ENCODE measurements at regions of chr7 and their contacts with region 1.

Region 1: GRCh38 chr7:112449902-112450806 is at the start of gene IFRD1:
- H3K4me3 Mint-ChIP-seq: peak within 1 kb of the TSS; percentile 93
- H3K27ac Mint-ChIP-seq: peak within 1 kb of the TSS; percentile 99
- H3K4me1 Mint-ChIP-seq: peaks cover 38% of the 10 kb centered on the region
- H3K27me3 Mint-ChIP-seq: no peaks in the 10 kb centered on the region

Region 2: GRCh38 chr7:111561885-111562732 is 888.0 kb before region 1 on chr7 and contains the start of gene IMMP2L:
- intact Hi-C with region 1: loop called (anchors 10 kb)
- H3K4me3 Mint-ChIP-seq: peak within 1 kb of the TSS; percentile 81
- H3K27ac Mint-ChIP-seq: peak within 1 kb of the TSS; percentile 84
- H3K4me1 Mint-ChIP-seq: peaks cover 19% of the 10 kb centered on the region
- H3K27me3 Mint-ChIP-seq: peaks cover 8% of the 10 kb centered on the region

Region 3: GRCh38 chr7:112371701-112372100 is 78.5 kb before region 1 on chr7:
- intact Hi-C with region 1: no loop called
- H3K4me3 Mint-ChIP-seq: no peak overlapping the region
- H3K27ac Mint-ChIP-seq: no peak overlapping the region
- H3K4me1 Mint-ChIP-seq: no peaks in the 10 kb centered on the region
- H3K27me3 Mint-ChIP-seq: peaks cover 4% of the 10 kb centered on the region

Region 4: GRCh38 chr7:112398534-112398933 is 51.6 kb before region 1 on chr7:
- intact Hi-C with region 1: loop called (anchors 2 kb)
- H3K4me3 Mint-ChIP-seq: no peak overlapping the region
- H3K27ac Mint-ChIP-seq: no peak overlapping the region
- H3K4me1 Mint-ChIP-seq: no peaks in the 10 kb centered on the region
- H3K27me3 Mint-ChIP-seq: peaks cover 11% of the 10 kb centered on the region

Region 5: GRCh38 chr7:112789817-112790585 is 339.8 kb after region 1 on chr7 and contains the start of gene TMEM168:
- intact Hi-C with region 1: loop called (anchors 10 kb)
- H3K4me3 Mint-ChIP-seq: peak within 1 kb of the TSS; percentile 88
- H3K27ac Mint-ChIP-seq: peak within 1 kb of the TSS; percentile 93
- H3K4me1 Mint-ChIP-seq: peaks cover 19% of the 10 kb centered on the region
- H3K27me3 Mint-ChIP-seq: no peaks in the 10 kb centered on the region

Region 6: DNA sequence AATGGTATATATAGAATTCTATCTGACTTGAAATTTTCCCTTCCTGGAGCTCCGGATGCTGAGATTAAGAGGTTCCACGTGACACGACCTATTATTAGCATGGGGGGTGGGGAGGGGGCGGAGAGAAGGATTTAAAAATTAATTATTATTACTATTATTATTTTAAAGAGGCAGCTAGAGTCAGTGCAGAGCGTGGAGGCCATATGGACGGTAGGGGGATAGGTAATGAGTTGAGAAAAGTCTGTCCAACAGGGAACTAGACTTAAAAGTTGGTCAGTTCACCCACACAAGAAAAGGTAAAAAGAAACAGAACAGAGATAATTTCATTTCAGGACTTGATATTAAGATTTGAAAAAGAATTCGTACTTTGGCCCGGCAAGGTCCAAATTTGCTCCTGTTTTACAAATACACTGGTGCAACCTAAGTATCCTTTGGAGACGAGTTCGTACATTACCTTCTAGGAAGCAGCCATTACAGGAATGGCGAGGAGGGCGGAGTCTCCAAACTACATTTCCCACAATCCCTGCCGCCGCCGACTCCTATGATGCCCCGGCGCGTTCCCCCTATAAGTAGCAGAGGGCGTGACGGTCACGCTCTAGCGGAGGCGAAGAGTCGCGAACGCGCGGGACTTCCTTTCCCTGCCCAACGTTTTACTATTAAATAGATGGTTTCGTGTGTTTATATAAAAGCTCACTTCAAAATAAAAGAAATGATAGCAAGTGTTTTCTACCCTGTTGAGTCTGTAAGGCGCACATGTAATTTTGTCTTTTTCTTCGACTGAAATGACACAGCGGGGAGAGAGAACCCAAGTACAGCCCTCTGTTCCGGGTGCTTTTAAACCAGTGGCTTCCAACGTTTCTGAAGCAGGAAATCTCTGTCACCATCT is 668.2 kb after region 1 on chr7 and contains the start of gene SMIM30:
- intact Hi-C with region 1: loop called (anchors 10 kb)
- H3K4me3 Mint-ChIP-seq: peak within 1 kb of the TSS; percentile 79
- H3K27ac Mint-ChIP-seq: peak within 1 kb of the TSS; percentile 90
- H3K4me1 Mint-ChIP-seq: peaks cover 25% of the 10 kb centered on the region
- H3K27me3 Mint-ChIP-seq: no peaks in the 10 kb centered on the region

Region 7: GRCh38 chr7:113404245-113404644 is 954.1 kb after region 1 on chr7:
- intact Hi-C with region 1: no loop called
- H3K4me3 Mint-ChIP-seq: no peak overlapping the region
- H3K27ac Mint-ChIP-seq: no peak overlapping the region
- H3K4me1 Mint-ChIP-seq: no peaks in the 10 kb centered on the region
- H3K27me3 Mint-ChIP-seq: no peaks in the 10 kb centered on the region

Measured in dendritic cell treated with granulocyte-macrophage colony-stimulating factor and Interleukin-4, amounts not matched to agents 40 ng/mL and 50 ng/mL, for 4 days (primary cell).